ENCODE measurements at regions of chr5 and their contacts with region 1.

Region 1: GRCh38 chr5:35926389-35927051 is 11.9 kb downstream of the CAPSL start:
- DNase-seq: no peak
- ATAC-seq: peak; percentile 61 to 63
- H3K4me3 ChIP-seq: no peak overlapping the region
- H3K27ac ChIP-seq: no peak overlapping the region
- H3K4me1 ChIP-seq: no peaks in the 10 kb centered on the region
- H3K27me3 ChIP-seq: peaks cover 4 to 14% (median 13%) of the 10 kb centered on the region in 3 donors
- CTCF ChIP-seq: peak; percentile 60 to 77 (median 67)
- POLR2A ChIP-seq: no peak

Region 2: DNA sequence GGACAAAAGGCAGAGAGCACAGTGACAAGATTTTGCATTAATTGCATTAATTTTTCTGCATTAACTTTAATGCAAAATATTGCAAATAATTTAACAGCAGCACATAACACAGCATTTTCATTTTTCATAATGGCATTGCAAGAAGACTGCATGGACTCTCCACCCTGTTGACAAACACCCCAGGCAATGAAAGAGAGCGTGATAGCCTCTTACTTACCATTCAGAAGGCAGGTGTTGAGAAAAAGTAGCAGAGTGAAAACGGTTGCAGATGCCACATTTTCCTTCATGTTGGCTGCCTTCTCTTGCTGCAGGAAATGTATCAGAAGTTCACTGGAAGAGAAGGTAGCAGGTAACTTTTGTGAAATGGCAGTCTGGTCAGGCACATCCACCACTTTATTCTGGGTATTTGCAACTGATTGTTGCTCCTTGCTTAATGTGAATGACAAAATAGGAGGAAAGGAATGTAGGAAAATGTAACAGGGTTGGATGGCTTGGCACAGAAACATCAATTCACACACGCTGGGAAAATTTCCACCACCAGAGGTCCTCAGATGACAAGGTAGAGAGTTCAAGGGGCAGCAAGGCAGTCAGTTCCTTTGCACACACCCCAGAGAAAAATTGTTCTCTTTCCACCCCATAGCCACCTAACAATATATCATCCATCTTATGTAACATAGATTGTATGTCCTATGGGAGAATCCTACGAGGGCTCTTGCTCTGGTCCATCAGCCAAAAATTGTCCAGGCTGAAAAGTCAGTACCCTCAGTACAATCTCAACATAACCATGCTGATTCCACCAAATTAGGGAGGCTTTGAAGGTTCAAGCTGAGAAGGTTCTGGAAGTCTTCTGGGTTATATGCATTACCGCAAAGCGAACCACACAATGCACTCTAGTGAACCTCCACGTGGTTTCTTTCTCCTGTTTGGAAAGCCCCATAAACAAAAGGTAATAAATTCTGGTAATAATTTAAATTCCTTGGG is 836.9 kb before region 1 on chr5:
- in situ Hi-C with region 1: loop called in 1 of 4 experiments (anchors 25 kb)
- intact Hi-C with region 1: no loop called
- DNase-seq: peak in 1 of 2 donors; percentile 17
- ATAC-seq: no peak
- H3K4me3 ChIP-seq: no peak overlapping the region
- H3K27ac ChIP-seq: no peak overlapping the region
- H3K4me1 ChIP-seq: no peaks in the 10 kb centered on the region
- H3K27me3 ChIP-seq: no peaks in the 10 kb centered on the region
- CTCF ChIP-seq: peak in 3 of 5 experiments; percentile 24 to 33 (median 29)
- POLR2A ChIP-seq: no peak

Region 3: GRCh38 chr5:35617435-35618303 is 308.9 kb before region 1 on chr5 and contains the start of gene SPEF2:
- in situ Hi-C with region 1: no loop called
- intact Hi-C with region 1: loop called (anchors 10 kb)
- DNase-seq: peak; percentile 33 to 58
- ATAC-seq: peak; percentile 75 to 85
- H3K4me3 ChIP-seq: peak within 1 kb of the TSS; percentile 63 to 84 (median 70)
- H3K27ac ChIP-seq: no peak within 1 kb of the TSS
- H3K4me1 ChIP-seq: peaks cover 3 to 7% of the 10 kb centered on the region in 2 donors
- H3K27me3 ChIP-seq: no peaks in the 10 kb centered on the region
- CTCF ChIP-seq: peak in 3 of 5 experiments; percentile 40 to 61 (median 44)
- POLR2A ChIP-seq: no peak
- total RNA-seq, gene SPEF2: 0.11 to 0.46 TPM in 2 of 4 donors, not detected in the others

Region 4: DNA sequence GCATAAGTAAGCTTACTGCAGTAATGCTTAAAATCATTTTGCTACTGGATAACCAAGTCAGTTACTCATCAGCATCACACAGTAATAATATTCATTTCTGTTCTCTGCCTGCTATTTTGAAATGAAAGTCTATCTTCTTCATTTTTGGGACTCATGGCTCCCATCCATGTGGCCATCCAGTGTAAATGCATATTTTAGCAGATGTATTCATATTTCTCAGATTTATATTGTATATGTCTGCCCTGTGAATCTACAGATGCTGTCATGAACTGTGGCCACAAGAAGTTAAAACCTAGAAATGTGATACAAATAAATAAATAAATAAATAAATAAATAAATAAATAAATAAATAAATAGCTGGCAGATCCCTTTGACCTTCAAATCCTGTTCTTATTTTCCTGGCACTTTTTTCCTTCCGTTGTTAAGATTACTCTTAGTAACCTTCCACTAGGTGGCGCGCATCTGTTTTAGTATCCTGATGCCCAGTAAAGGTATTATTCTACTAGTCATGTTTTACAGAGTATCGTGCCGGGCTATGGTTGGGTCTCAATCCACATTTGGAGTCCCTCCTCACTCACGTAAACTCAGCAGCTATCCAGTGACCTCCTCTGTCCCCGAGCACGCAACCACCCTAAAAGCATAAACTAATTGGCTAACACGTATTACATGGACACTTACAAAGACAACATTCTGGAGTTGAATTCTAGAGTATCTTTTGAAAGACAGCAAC is 149.0 kb before region 1 on chr5:
- in situ Hi-C with region 1: loop called in 2 of 4 experiments (anchors 5 to 10 kb)
- intact Hi-C with region 1: loop called (anchors 2 kb)
- DNase-seq: peak; percentile 15
- ATAC-seq: no peak
- H3K4me3 ChIP-seq: no peak overlapping the region
- H3K27ac ChIP-seq: no peak overlapping the region
- H3K4me1 ChIP-seq: no peaks in the 10 kb centered on the region
- H3K27me3 ChIP-seq: no peaks in the 10 kb centered on the region
- CTCF ChIP-seq: peak in 3 of 5 experiments; percentile 25 to 50 (median 48)
- POLR2A ChIP-seq: no peak